MCF 10A (cell line): ENCODE measurements at regions of chr1 and their contacts with region 1.

Region 1: DNA sequence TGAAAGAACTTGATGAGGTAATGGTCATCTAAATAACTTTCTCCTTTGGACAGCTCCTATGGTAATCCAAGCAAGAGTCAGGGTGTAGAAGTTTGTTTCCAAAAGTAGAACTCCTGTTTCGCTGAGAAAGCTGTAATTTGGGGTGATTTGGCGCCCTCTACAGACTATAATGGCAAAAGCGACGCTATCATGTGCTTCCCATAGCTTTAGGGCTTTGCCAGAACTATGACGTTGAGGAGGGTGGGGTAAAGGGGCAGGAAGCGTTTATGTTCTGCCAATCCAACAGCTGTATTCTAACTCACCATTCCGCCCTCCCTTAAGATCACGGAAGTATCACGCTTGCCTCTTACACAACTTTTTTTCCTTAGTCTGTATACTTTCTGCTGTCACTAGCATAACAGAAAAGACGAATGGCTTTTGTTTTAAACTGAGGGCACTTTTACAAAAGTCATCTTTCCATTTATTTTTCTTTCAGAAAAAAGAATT is at the start of gene FMO4:
- DNase-seq: peak; percentile 100
- H3K4me3 Mint-ChIP-seq: peak within 1 kb of the TSS; percentile 64
- H3K27ac Mint-ChIP-seq: peak within 1 kb of the TSS; percentile 79
- H3K4me1 Mint-ChIP-seq: peaks cover 6% of the 10 kb centered on the region
- H3K27me3 Mint-ChIP-seq: no peaks in the 10 kb centered on the region
- CTCF ChIP-seq: peak; percentile 85
- total RNA-seq, gene FMO4: 0.63 and 1.5 TPM in 2 replicates

Region 2: DNA sequence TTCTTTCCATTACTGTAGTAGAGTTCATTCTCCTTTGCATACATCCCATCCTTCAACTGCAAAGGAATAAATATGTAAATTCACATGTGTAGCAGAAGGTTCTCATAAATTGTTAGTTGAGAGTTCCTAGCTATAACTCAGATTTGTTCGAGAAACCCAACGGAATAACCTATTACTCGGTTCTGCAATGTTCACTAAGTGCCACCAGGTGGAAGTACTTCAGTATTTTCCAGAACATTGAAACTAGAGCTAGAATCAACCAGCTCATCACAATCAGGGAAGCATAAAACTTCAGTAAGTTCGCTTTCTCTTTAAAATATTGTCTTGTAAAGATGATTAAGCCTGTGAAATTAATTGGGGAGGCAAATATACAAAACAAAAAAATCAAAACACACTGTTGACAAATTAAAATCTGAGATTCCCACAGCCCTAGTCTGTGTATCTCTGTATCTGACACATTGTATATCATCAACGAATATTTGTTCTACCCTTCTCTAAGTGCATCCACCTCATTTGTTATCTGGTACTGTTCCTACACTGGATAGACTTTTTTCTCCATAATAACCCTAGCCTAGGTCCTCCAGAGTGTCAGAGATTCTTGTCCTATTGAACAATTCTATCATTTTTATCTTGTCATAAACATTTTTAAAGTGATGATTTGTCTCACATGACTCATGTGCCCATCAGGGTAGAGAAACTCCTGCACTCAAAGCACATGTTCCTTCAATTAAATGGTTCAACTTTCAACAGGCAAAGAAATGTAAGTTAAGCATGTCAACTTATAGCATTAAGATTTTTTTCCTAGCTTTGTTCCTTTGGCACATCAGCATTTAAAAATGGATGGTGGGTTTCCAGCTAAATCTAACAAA is 346.6 kb before region 1 on chr1:
- CTCF ChIA-PET with region 1: interaction called, 87 read pairs
- POLR2A ChIA-PET with region 1: no interaction called
- intact Hi-C with region 1: loop called (anchors 1 kb)
- DNase-seq: peak; percentile 73
- H3K4me3 Mint-ChIP-seq: no peak overlapping the region
- H3K27ac Mint-ChIP-seq: no peak overlapping the region
- H3K4me1 Mint-ChIP-seq: peaks cover 10% of the 10 kb centered on the region
- H3K27me3 Mint-ChIP-seq: no peaks in the 10 kb centered on the region
- CTCF ChIP-seq: peak; percentile 74

Region 3: DNA sequence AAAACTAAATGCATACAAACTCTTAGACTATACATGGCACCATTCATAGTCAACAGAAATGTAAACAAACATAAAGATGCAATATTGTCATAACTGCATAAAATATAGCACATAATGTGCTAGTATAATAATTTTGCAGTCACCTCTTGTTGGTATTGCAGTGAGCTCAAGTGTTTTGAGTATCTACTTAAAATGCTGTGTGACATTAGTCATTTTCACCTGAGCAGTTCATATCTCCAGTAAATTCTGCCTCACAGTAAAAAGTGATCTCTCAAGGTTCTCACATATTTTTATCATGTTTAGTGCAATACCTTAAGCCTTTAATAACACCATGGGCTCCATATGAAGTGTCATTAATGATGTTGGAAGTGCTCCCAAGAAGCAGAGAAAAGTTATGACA is 158.4 kb before region 1 on chr1:
- CTCF ChIA-PET with region 1: no interaction called
- POLR2A ChIA-PET with region 1: no interaction called
- intact Hi-C with region 1: no loop called
- DNase-seq: no peak
- H3K4me3 Mint-ChIP-seq: no peak overlapping the region
- H3K27ac Mint-ChIP-seq: no peak overlapping the region
- H3K4me1 Mint-ChIP-seq: no peaks in the 10 kb centered on the region
- H3K27me3 Mint-ChIP-seq: no peaks in the 10 kb centered on the region
- CTCF ChIP-seq: no peak

Region 4: GRCh38 chr1:171196351-171196750 is 117.5 kb before region 1 on chr1:
- CTCF ChIA-PET with region 1: interaction called, 12 read pairs
- POLR2A ChIA-PET with region 1: no interaction called
- intact Hi-C with region 1: no loop called
- DNase-seq: no peak
- H3K4me3 Mint-ChIP-seq: no peak overlapping the region
- H3K27ac Mint-ChIP-seq: no peak overlapping the region
- H3K4me1 Mint-ChIP-seq: no peaks in the 10 kb centered on the region
- H3K27me3 Mint-ChIP-seq: no peaks in the 10 kb centered on the region
- CTCF ChIP-seq: no peak

Region 5: GRCh38 chr1:171233190-171233589 is 80.7 kb before region 1 on chr1:
- CTCF ChIA-PET with region 1: interaction called, 651 read pairs
- POLR2A ChIA-PET with region 1: interaction called, 4 read pairs
- intact Hi-C with region 1: no loop called
- DNase-seq: no peak
- H3K4me3 Mint-ChIP-seq: no peak overlapping the region
- H3K27ac Mint-ChIP-seq: no peak overlapping the region
- H3K4me1 Mint-ChIP-seq: no peaks in the 10 kb centered on the region
- H3K27me3 Mint-ChIP-seq: no peaks in the 10 kb centered on the region
- CTCF ChIP-seq: no peak

Region 6: GRCh38 chr1:171286032-171286705 is 27.7 kb before region 1 on chr1:
- CTCF ChIA-PET with region 1: interaction called, 43 read pairs
- POLR2A ChIA-PET with region 1: interaction called, 6 read pairs
- intact Hi-C with region 1: no loop called
- DNase-seq: peak; percentile 66
- H3K4me3 Mint-ChIP-seq: no peak overlapping the region
- H3K27ac Mint-ChIP-seq: no peak overlapping the region
- H3K4me1 Mint-ChIP-seq: peaks cover 8% of the 10 kb centered on the region
- H3K27me3 Mint-ChIP-seq: no peaks in the 10 kb centered on the region
- CTCF ChIP-seq: no peak

Region 7: GRCh38 chr1:171403371-171403770 is 89.5 kb after region 1 on chr1:
- CTCF ChIA-PET with region 1: interaction called, 33 read pairs
- POLR2A ChIA-PET with region 1: no interaction called
- intact Hi-C with region 1: no loop called
- DNase-seq: peak; percentile 81
- H3K4me3 Mint-ChIP-seq: no peak overlapping the region
- H3K27ac Mint-ChIP-seq: peak overlapping the region; percentile 86
- H3K4me1 Mint-ChIP-seq: peaks cover 18% of the 10 kb centered on the region
- H3K27me3 Mint-ChIP-seq: no peaks in the 10 kb centered on the region
- CTCF ChIP-seq: no peak